ENCODE measurements at regions of chr2 and their contacts with region 1.

Region 1: GRCh38 chr2:29235411-29235810 is 120.2 kb downstream of the CLIP4 start:
- DNase-seq: no peak
- H3K4me3 ChIP-seq: no peak overlapping the region
- H3K27ac ChIP-seq: no peak overlapping the region
- H3K27me3 ChIP-seq: peaks cover 35% of the 10 kb centered on the region
- CTCF ChIP-seq: no peak

Region 2: DNA sequence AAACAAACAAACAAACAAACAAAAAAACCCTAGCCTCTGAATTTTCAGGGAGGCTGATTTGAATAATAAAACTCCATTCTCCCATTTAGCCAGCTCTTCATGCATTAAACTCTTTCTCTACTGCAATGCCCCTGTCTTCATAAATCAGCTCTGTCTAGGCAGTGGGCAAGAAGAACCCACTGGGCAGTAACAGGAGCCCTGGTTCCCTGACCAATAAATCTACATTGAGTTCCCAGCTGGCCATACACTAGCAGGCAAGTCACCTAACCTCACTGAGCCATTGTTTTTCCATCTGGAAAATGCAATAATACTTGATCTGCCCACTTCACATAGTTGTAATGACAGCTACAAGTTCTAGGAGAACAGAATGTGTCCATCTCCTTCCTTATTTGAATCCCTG is 853.8 kb after region 1 on chr2:
- CTCF ChIA-PET with region 1: interaction called, 10 read pairs
- POLR2A ChIA-PET with region 1: no interaction called
- DNase-seq: no peak
- H3K4me3 ChIP-seq: no peak overlapping the region
- H3K27ac ChIP-seq: no peak overlapping the region
- H3K27me3 ChIP-seq: peaks cover 30% of the 10 kb centered on the region
- CTCF ChIP-seq: no peak